RWPE1 (cell line): ENCODE measurements at regions of chr16 and their contacts with region 1.

Region 1: GRCh38 chr16:74998481-74999218 is at the start of gene ZNRF1:
- DNase-seq: peak; percentile 86
- H3K27ac ChIP-seq: peak within 1 kb of the TSS; percentile 83
- CTCF ChIP-seq: peak; percentile 74

Region 2: GRCh38 chr16:74487596-74488495 is 510.8 kb before region 1 on chr16:
- CTCF ChIA-PET with region 1: no interaction called
- POLR2A ChIA-PET with region 1: no interaction called
- DNase-seq: no peak
- H3K27ac ChIP-seq: no peak overlapping the region
- CTCF ChIP-seq: no peak

Region 3: GRCh38 chr16:75110637-75111513 is 112.2 kb after region 1 on chr16:
- CTCF ChIA-PET with region 1: interaction called, 71 read pairs
- POLR2A ChIA-PET with region 1: interaction called, 3 read pairs
- DNase-seq: peak; percentile 76
- H3K27ac ChIP-seq: peak overlapping the region; percentile 97
- CTCF ChIP-seq: peak; percentile 86